ENCODE measurements at regions of chr15 and their contacts with region 1.

Region 1: GRCh38 chr15:45618813-45619212 is 16.0 kb upstream of the SQOR start:
- DNase-seq: no peak
- H3K4me3 ChIP-seq: no peak overlapping the region
- H3K27ac ChIP-seq: no peak overlapping the region
- H3K4me1 ChIP-seq: peaks cover 14% of the 10 kb centered on the region
- H3K27me3 ChIP-seq: no peaks in the 10 kb centered on the region
- CTCF ChIP-seq: no peak

Region 2: GRCh38 chr15:45414215-45414885 is 204.5 kb before region 1 on chr15:
- CTCF ChIA-PET with region 1: no interaction called
- POLR2A ChIA-PET with region 1: no interaction called
- intact Hi-C with region 1: no loop called
- DNase-seq: no peak
- H3K4me3 ChIP-seq: no peak overlapping the region
- H3K27ac ChIP-seq: no peak overlapping the region
- H3K4me1 ChIP-seq: no peaks in the 10 kb centered on the region
- H3K27me3 ChIP-seq: no peaks in the 10 kb centered on the region
- CTCF ChIP-seq: no peak

Region 3: DNA sequence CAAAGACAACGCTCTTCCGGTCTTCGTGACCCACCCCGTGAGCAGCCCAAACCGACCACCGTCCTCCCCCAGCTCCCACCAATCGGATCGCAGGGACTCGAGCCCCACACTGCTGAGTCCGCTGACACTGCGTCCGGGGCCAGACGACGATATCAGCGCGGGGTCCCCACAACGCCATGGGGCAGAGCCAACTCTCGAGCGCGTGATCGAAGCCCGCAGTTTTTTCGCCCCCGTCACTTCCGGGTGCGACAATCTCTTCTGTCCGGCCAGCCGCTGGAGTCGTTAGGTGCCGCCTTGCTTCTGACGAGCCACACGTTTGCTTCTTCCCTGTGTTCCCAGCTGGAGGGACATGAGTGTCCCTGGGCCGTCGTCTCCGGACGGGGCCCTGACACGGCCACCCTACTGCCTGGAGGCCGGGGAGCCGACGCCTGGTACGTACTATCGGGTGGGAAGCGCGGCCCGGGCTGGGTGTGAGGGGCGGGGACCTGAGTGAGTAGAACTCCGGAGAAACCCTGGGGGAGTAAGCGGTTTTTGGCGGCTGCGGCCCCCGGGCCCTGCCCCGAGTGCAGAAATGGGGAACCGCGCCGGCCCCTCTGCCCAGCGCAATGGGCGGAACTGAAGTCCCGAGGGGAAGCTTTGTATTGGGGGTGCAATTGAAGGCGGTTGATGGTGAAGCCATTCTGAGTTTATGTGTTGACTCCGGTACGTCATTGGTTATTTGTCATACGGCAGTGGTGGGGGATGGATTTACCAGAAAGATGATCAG is 31.5 kb before region 1 on chr15 and contains the start of gene BLOC1S6:
- CTCF ChIA-PET with region 1: no interaction called
- POLR2A ChIA-PET with region 1: no interaction called
- intact Hi-C with region 1: no loop called
- DNase-seq: peak; percentile 78 to 80
- H3K4me3 ChIP-seq: peak within 1 kb of the TSS; percentile 96
- H3K27ac ChIP-seq: peak within 1 kb of the TSS; percentile 92
- H3K4me1 ChIP-seq: peaks cover 25% of the 10 kb centered on the region
- H3K27me3 ChIP-seq: no peaks in the 10 kb centered on the region
- CTCF ChIP-seq: no peak
- total RNA-seq, gene BLOC1S6: 22.7 and 29.4 TPM in 2 replicates

Region 4: GRCh38 chr15:45641374-45641781 is 22.6 kb after region 1 on chr15:
- CTCF ChIA-PET with region 1: no interaction called
- POLR2A ChIA-PET with region 1: no interaction called
- intact Hi-C with region 1: loop called (anchors 2 kb)
- DNase-seq: peak; percentile 31 to 95
- H3K4me3 ChIP-seq: peak overlapping the region; percentile 34; the same call in 1 of the 2 replicates
- H3K27ac ChIP-seq: peak overlapping the region; percentile 90
- H3K4me1 ChIP-seq: peaks cover 59% of the 10 kb centered on the region
- H3K27me3 ChIP-seq: no peaks in the 10 kb centered on the region
- CTCF ChIP-seq: no peak

Region 5: DNA sequence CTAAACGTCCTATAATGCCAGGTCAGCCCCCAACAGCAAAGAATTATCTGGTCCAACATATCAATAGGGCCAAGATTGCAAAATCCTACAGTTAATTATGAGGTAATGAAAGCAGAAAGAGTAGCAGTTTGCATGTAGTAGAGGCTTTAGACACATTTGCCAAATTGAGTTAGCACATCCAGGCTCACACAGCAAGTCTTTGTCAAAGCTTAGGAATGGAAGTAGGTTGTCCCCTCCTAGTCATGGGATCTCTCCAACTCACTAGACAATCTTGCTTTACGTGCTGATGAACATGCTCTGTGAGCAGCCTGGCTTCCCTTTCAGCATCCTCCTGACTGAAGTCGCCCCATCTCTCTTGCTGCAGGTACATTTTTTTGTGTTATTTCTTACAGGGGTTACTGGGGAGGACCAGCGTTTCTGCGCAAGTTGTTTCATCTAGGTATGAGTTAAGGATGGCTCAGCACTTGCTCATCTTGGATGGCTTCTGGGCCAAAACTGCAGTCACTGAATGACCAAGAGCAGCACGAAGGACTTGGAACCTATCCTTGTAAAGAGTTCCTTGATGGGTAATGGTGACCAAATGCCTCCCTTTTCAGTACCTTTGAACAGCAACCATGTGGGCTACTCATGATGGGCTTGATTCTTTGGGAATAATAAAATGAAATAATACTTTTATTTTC is 71.9 kb after region 1 on chr15:
- CTCF ChIA-PET with region 1: no interaction called
- POLR2A ChIA-PET with region 1: interaction called, 15 read pairs
- intact Hi-C with region 1: no loop called
- DNase-seq: no peak
- H3K4me3 ChIP-seq: no peak overlapping the region
- H3K27ac ChIP-seq: no peak overlapping the region
- H3K4me1 ChIP-seq: no peaks in the 10 kb centered on the region
- H3K27me3 ChIP-seq: no peaks in the 10 kb centered on the region
- CTCF ChIP-seq: no peak

Measured in PC-9 (cell line).